Activated CD4-positive, alpha-beta T cell treated with anti-CD3 and anti-CD28 coated beads, Interleukin-2, amount 10 ng/mL, durations not matched to agents 24 days and 14 days (primary cell): ENCODE measurements at regions of chr9 and their contacts with region 1.

Region 1: GRCh38 chr9:27529316-27530278 is at the start of gene MOB3B:
- DNase-seq: peak; percentile 94
- H3K4me3 Mint-ChIP-seq: peak within 1 kb of the TSS; percentile 90
- H3K27ac Mint-ChIP-seq: peak within 1 kb of the TSS; percentile 72
- H3K4me1 Mint-ChIP-seq: peaks cover 11% of the 10 kb centered on the region
- H3K27me3 Mint-ChIP-seq: peaks cover 39% of the 10 kb centered on the region
- total RNA-seq, gene MOB3B: 0.82 and 1.1 TPM in 2 replicates

Region 2: DNA sequence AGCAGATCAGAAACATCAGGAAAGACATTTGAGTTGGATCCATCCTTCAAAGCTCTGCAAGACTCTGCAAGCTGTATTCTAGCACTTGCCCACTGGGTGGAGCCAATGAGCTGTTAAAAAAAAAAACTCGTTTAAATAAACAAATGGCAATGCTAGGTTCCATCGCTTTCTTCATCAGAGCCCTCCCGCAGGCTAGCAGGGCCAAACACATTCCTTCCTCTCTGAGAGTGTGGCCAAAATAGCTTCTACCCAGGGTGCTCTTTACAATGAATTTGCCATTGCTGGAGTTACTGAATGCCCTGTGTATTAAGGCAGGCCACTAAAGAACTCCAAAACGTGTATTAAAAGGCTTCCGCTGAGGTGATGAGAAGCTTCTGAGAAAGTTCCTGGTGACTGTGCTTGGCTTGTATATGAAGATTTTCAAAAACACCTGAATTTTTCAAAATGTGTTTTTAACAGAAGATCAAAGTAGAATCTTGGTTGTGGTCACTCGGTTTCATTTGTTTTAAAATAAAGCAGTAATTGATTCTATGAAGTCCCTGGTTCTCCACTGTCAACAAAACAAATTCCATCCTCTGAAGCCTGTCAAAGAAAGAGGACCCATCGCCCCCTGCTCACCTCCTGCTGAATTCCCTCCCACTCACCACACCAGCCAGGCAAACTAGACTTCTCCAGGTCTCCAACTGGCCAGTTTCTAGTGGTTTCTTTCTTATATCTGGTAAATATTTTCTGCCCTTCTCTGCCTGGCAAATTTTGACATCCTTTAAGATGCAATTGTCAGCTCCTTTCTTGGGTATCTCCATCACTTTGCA is 196.2 kb before region 1 on chr9:
- intact Hi-C with region 1: loop called (anchors 1 kb)
- DNase-seq: peak; percentile 89
- H3K4me3 Mint-ChIP-seq: no peak overlapping the region
- H3K27ac Mint-ChIP-seq: no peak overlapping the region
- H3K4me1 Mint-ChIP-seq: peaks cover 3% of the 10 kb centered on the region
- H3K27me3 Mint-ChIP-seq: peaks cover 5% of the 10 kb centered on the region

Region 3: DNA sequence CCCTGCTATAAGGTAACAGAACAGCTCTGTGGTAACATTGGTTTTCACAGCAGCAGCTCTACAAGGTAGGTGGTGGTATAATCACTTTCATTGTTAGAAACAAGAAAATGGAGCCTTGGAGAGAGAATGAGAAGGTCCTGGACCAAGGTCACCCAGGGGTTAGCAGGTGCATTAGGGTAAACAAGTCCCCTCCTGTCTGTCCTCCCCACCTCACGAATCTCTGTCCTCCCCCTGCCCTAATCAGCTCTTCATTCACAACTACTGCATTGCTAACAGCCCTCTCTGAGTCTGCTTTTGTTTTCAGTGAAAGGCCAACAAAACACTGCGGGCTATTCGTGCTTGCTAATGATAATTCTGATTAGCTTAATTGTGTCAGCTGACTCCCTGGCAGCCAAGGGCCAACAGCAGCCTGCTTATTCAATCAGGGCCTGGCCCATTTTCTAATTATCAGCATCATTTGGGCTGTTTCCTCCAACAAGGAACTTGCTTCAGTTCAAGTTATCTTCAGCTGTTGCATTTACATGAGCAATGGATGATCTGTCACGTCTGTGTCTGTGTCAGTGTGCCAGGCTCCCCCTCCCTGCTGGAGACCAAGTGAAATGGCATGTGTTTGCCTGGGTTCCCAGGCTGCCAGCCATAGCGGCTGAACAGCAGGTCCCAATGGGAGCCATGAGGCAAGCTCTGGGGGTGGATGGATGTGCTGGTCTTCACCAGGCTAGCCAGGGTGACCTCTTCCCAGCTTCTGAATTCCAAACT is 175.9 kb before region 1 on chr9:
- intact Hi-C with region 1: loop called (anchors 5 kb)
- DNase-seq: no peak
- H3K4me3 Mint-ChIP-seq: no peak overlapping the region
- H3K27ac Mint-ChIP-seq: no peak overlapping the region
- H3K4me1 Mint-ChIP-seq: peaks cover 33% of the 10 kb centered on the region
- H3K27me3 Mint-ChIP-seq: no peaks in the 10 kb centered on the region

Region 4: GRCh38 chr9:27499481-27499880 is 30.1 kb before region 1 on chr9:
- intact Hi-C with region 1: loop called (anchors 2 kb)
- DNase-seq: no peak
- H3K4me3 Mint-ChIP-seq: peak overlapping the region; percentile 22
- H3K27ac Mint-ChIP-seq: peak overlapping the region; percentile 13
- H3K4me1 Mint-ChIP-seq: peaks cover 18% of the 10 kb centered on the region
- H3K27me3 Mint-ChIP-seq: no peaks in the 10 kb centered on the region